MCF 10A (cell line): ENCODE measurements at regions of chr12 and their contacts with region 1.

Region 1: GRCh38 chr12:106892075-106892474 is 63.6 kb upstream of the TMEM263 start:
- DNase-seq: no peak
- H3K4me3 Mint-ChIP-seq: no peak overlapping the region
- H3K27ac Mint-ChIP-seq: no peak overlapping the region
- H3K4me1 Mint-ChIP-seq: no peaks in the 10 kb centered on the region
- H3K27me3 Mint-ChIP-seq: no peaks in the 10 kb centered on the region
- CTCF ChIP-seq: no peak

Region 2: DNA sequence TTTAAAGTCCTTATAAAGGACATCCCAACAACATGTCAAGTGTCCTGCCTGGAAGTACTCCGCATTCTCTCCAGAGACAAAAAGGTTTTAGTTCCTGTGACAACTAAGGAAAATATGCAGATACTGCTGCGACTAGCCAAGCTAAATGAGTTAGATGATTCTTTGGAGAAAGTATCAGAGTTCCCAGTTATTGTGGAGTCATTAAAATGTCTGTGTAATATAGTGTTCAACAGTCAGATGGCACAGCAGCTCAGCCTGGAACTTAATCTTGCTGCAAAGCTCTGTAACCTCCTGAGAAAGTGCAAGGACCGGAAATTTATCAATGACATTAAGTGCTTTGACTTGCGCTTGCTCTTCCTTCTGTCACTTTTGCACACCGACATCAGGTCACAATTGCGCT is 77.4 kb before region 1 on chr12:
- CTCF ChIA-PET with region 1: no interaction called
- POLR2A ChIA-PET with region 1: no interaction called
- intact Hi-C with region 1: no loop called
- DNase-seq: no peak
- H3K4me3 Mint-ChIP-seq: no peak overlapping the region
- H3K27ac Mint-ChIP-seq: no peak overlapping the region
- H3K4me1 Mint-ChIP-seq: no peaks in the 10 kb centered on the region
- H3K27me3 Mint-ChIP-seq: no peaks in the 10 kb centered on the region
- CTCF ChIP-seq: no peak

Region 3: DNA sequence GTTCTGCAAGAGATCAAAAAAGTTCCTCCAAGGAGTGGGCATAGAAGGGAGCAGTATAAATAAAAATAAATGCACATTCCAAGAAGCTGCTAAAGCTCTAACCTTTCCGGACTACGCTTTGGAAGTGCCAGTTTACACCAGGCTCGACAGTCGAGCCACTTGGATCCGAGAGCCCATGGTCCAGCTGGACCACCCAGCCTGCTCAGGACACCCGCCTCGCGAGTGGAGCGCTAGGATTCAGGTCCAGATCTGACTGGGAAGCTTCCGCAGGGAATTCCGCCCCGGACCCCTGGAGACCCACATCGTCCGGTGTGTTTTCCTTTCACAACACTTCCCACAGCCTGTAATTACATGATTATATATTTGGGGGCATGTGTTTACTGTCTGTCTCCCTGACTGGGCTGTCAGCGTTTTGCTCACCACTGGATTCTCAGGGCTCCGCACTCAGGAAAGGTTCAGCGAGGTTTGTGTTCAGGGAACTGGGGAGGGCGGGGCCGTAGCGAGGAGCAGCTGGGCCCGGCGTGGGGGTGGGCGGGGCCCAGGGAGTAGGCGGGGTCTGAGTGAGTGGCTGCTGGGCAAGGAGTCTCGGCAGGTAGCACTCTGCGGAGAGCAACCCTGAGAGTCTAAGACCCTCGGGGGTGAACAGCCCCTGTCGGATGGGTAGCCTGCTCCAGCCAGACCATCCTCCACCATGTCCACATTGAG is 11.3 kb after region 1 on chr12:
- CTCF ChIA-PET with region 1: interaction called, 5 read pairs
- POLR2A ChIA-PET with region 1: interaction called, 10 read pairs
- intact Hi-C with region 1: no loop called
- DNase-seq: peak; percentile 70
- H3K4me3 Mint-ChIP-seq: peak overlapping the region; percentile 7
- H3K27ac Mint-ChIP-seq: no peak overlapping the region
- H3K4me1 Mint-ChIP-seq: no peaks in the 10 kb centered on the region
- H3K27me3 Mint-ChIP-seq: no peaks in the 10 kb centered on the region
- CTCF ChIP-seq: no peak

Region 4: GRCh38 chr12:106926657-106927056 is 34.6 kb after region 1 on chr12:
- CTCF ChIA-PET with region 1: no interaction called
- POLR2A ChIA-PET with region 1: no interaction called
- intact Hi-C with region 1: no loop called
- DNase-seq: no peak
- H3K4me3 Mint-ChIP-seq: no peak overlapping the region
- H3K27ac Mint-ChIP-seq: no peak overlapping the region
- H3K4me1 Mint-ChIP-seq: no peaks in the 10 kb centered on the region
- H3K27me3 Mint-ChIP-seq: peaks cover 12% of the 10 kb centered on the region
- CTCF ChIP-seq: no peak

Region 5: GRCh38 chr12:107025712-107026111 is 133.6 kb after region 1 on chr12:
- CTCF ChIA-PET with region 1: no interaction called
- POLR2A ChIA-PET with region 1: no interaction called
- intact Hi-C with region 1: no loop called
- DNase-seq: no peak
- H3K4me3 Mint-ChIP-seq: no peak overlapping the region
- H3K27ac Mint-ChIP-seq: no peak overlapping the region
- H3K4me1 Mint-ChIP-seq: peaks cover 7% of the 10 kb centered on the region
- H3K27me3 Mint-ChIP-seq: no peaks in the 10 kb centered on the region
- CTCF ChIP-seq: no peak